ENCODE measurements at regions of chr16 and their contacts with region 1.

Region 1: GRCh38 chr16:22372882-22373661 is 1.3 kb downstream of the CDR2 start:
- DNase-seq: peak in 2 of 35 experiments; percentile 14 to 39
- ATAC-seq: no peak
- H3K4me3 ChIP-seq: peak overlapping the region; percentile 78 to 96
- H3K4me3 Mint-ChIP-seq: peak overlapping the region; percentile 96 to 98 (median 98)
- H3K27ac ChIP-seq: peak overlapping the region; percentile 67
- H3K27ac Mint-ChIP-seq: peak overlapping the region; percentile 95 to 96
- H3K4me1 ChIP-seq: peaks cover 33 to 35% of the 10 kb centered on the region in 2 experiments
- H3K4me1 Mint-ChIP-seq: peaks cover 58 to 64% (median 60%) of the 10 kb centered on the region in 3 donors
- H3K27me3 ChIP-seq: no peaks in the 10 kb centered on the region
- H3K27me3 Mint-ChIP-seq: no peaks in the 10 kb centered on the region

Region 2: GRCh38 chr16:22360963-22361659 is 12.0 kb before region 1 on chr16:
- CTCF ChIA-PET with region 1: interaction called in 1 of 2 experiments, 6 read pairs
- POLR2A ChIA-PET with region 1: interaction called in 1 of 2 experiments, 10 read pairs
- DNase-seq: no peak
- ATAC-seq: no peak
- H3K4me3 ChIP-seq: no peak overlapping the region
- H3K4me3 Mint-ChIP-seq: no peak overlapping the region
- H3K27ac ChIP-seq: peak overlapping the region; percentile 45
- H3K27ac Mint-ChIP-seq: peak overlapping the region; percentile 79 to 89
- H3K4me1 ChIP-seq: peaks cover 32 to 44% of the 10 kb centered on the region in 2 experiments
- H3K4me1 Mint-ChIP-seq: peaks cover 63 to 84% (median 84%) of the 10 kb centered on the region in 3 donors
- H3K27me3 ChIP-seq: no peaks in the 10 kb centered on the region
- H3K27me3 Mint-ChIP-seq: no peaks in the 10 kb centered on the region

Region 3: GRCh38 chr16:22388101-22388644 is 15.1 kb after region 1 on chr16:
- CTCF ChIA-PET with region 1: no interaction called
- POLR2A ChIA-PET with region 1: no interaction called
- DNase-seq: no peak
- ATAC-seq: no peak
- H3K4me3 ChIP-seq: no peak overlapping the region
- H3K4me3 Mint-ChIP-seq: no peak overlapping the region
- H3K27ac ChIP-seq: no peak overlapping the region
- H3K27ac Mint-ChIP-seq: no peak overlapping the region
- H3K4me1 ChIP-seq: no peaks in the 10 kb centered on the region
- H3K4me1 Mint-ChIP-seq: peaks cover 2 to 7% (median 5%) of the 10 kb centered on the region in 3 donors
- H3K27me3 ChIP-seq: no peaks in the 10 kb centered on the region
- H3K27me3 Mint-ChIP-seq: no peaks in the 10 kb centered on the region